ENCODE measurements at regions of chr9 and their contacts with region 1.

Region 1: GRCh38 chr9:35258676-35259474 is 97.1 kb downstream of the UNC13B start:
- DNase-seq: peak; percentile 34
- H3K4me3 ChIP-seq: no peak overlapping the region
- H3K27ac ChIP-seq: no peak overlapping the region
- H3K27me3 ChIP-seq: no peaks in the 10 kb centered on the region
- CTCF ChIP-seq: peak; percentile 85

Region 2: DNA sequence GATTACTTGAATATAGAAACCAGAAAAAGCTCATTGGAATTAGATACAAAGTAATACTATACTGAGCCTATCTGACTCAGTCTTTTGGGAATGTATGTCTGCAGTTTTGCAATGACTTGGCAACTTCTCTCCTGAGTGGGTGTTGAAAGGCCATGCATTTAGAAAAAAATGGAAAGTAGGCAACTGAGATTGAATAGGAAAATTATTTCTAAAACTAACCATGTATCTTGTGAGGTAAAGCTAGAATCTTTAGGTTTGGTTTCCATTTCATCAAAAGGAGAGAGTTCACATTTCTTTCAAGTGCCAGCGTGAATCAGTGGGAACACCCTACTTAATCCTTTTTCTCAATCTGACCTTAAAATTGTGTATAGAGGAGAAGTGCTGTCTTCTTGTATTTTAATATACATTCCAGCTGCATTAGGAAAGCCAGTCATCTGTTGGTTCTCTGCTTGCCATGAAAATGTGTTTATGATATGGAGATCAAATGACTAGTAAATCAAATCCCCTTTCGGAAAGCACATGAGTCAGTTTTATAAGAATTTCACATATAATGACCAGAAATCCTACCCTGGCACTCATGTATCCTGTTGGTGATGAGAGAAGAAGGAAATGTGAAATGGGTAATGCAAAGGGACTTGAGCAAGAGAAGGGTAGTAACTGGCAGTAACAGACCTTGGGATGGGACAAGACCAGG is 1938.2 kb before region 1 on chr9:
- CTCF ChIA-PET with region 1: interaction called, 10 read pairs
- POLR2A ChIA-PET with region 1: no interaction called
- DNase-seq: peak; percentile 90
- H3K4me3 ChIP-seq: no peak overlapping the region
- H3K27ac ChIP-seq: peak overlapping the region; percentile 96
- H3K27me3 ChIP-seq: no peaks in the 10 kb centered on the region
- CTCF ChIP-seq: no peak

Region 3: GRCh38 chr9:35161713-35162604 is 96.9 kb before region 1 on chr9 and contains the start of gene UNC13B:
- CTCF ChIA-PET with region 1: interaction called, 10 read pairs
- POLR2A ChIA-PET with region 1: no interaction called
- DNase-seq: peak; percentile 74
- H3K4me3 ChIP-seq: peak within 1 kb of the TSS; percentile 88
- H3K27ac ChIP-seq: peak within 1 kb of the TSS; percentile 80
- H3K27me3 ChIP-seq: no peaks in the 10 kb centered on the region
- CTCF ChIP-seq: 0 out of 2 replicates have a peak, but pooled peaks have one; percentile 26
- polyA plus RNA-seq, gene UNC13B: 12.5 and 15.4 TPM in 2 replicates

Region 4: DNA sequence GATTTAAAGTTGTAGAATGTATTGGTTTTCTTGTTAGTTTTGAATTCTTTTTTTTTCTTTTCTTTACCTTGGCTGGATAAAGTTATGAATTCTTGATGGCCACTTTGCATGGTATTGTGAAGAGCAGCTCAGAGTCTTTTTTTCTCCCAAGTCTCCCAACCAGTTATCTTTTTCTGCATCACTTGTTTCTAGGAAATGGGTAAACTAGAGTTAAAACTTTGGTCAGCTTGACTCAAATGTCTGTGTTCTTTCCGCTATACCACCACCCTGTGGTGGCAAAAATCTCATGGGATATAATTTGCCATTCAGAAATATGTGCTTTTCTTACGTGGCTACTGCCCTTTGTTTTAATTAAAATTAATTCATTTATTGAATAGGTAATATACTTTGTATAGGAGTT is 16.1 kb after region 1 on chr9:
- CTCF ChIA-PET with region 1: interaction called, 10 read pairs
- POLR2A ChIA-PET with region 1: no interaction called
- DNase-seq: no peak
- H3K4me3 ChIP-seq: no peak overlapping the region
- H3K27ac ChIP-seq: no peak overlapping the region
- H3K27me3 ChIP-seq: no peaks in the 10 kb centered on the region
- CTCF ChIP-seq: no peak

Region 5: GRCh38 chr9:35385042-35385441 is 126.2 kb after region 1 on chr9:
- CTCF ChIA-PET with region 1: interaction called, 11 read pairs
- POLR2A ChIA-PET with region 1: no interaction called
- DNase-seq: peak; percentile 37
- H3K4me3 ChIP-seq: no peak overlapping the region
- H3K27ac ChIP-seq: no peak overlapping the region
- H3K27me3 ChIP-seq: no peaks in the 10 kb centered on the region
- CTCF ChIP-seq: peak; percentile 69

Region 6: DNA sequence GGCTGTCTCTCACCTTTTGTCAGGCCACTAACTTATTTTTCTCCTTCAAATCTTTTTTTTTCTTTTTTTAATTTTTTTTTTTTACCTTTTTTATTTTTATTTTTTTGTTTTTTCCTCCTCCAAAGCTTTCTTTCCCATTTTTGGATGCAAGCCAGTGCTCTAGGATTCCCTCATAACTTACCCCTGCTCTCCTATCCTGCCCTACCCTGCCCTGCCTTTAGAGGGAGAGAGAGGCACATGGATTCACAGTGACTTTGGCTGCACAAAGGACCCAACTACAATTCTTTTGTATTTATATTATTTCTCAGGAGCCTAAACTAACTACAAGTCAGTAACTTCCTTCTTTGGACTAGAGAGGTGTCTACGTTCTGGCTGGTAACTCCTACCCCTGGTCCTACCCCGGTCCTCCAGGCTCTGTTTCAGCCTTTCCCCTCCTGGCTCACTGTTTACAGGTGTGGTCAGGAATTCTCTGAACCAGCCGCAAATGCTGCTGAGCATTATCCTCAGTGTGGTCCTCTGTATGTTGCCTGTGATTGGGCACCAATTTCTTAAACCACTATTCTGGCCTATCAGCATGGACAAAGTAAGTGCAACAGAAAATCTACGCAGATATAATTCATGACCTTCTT is 222.6 kb after region 1 on chr9:
- CTCF ChIA-PET with region 1: interaction called, 12 read pairs
- POLR2A ChIA-PET with region 1: no interaction called
- DNase-seq: peak; percentile 52
- H3K4me3 ChIP-seq: no peak overlapping the region
- H3K27ac ChIP-seq: no peak overlapping the region
- H3K27me3 ChIP-seq: peaks cover 3% of the 10 kb centered on the region
- CTCF ChIP-seq: peak; percentile 80